H1 (cell line): ENCODE measurements at regions of chr3 and their contacts with region 1.

Region 1: DNA sequence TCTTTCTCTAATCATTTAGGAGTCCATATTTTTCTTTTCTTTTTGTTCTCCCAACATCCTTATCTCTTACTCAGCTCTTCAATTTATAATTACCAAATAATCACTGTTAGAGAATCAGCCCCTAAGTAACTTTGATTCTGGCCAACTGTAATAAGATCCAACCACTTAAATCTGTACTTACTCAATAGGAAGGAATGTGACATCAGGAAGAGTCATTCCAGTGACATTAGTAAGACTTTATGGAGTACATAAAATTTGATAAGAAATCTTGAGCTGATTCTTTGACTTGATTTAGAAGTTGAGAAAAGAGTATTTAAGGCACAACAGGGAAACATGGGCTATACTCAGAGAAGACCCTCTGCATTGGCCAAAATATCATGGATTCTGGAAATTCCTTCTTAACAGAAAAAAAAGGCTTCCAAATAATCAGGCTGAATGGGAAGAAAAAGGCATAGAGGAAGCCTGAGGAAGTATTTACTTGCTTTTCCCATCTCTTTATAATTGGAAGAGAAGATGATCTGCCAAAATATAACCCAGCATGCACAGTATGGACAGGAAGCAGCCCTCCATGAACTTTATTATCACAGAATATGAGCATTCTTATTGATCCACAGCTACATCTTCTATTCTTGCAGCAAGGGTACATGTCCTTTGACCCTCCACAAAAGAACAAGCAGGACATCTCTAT is 289.7 kb upstream of the TPRG1 start:
- DNase-seq: no peak
- H3K4me3 ChIP-seq: no peak overlapping the region
- H3K27ac ChIP-seq: no peak overlapping the region
- H3K4me1 ChIP-seq: no peaks in the 10 kb centered on the region
- H3K27me3 ChIP-seq: no peaks in the 10 kb centered on the region
- CTCF ChIP-seq: no peak
- EP300 ChIP-seq: no peak
- POLR2A ChIP-seq: no peak
- RAD21 ChIP-seq: no peak

Region 2: DNA sequence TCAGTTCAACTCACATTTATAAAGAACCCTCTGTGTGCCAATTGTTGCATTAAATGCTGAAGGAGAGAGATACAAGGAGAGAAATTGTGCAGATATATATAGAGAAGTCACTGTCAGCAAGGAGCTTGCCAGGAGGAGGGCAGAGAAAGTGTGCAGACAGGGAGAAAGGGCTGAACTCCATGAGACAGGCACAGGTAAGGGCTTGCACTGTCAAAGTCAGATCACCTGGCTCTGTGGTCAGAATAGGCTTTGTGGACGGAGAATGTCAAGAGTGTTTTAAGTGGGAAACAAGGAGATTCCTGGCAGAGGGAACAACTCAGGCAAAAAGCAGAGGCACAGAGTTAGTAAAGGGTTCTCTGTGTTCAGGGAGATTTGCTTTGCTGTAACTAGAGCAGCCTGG is 13.3 kb before region 1 on chr3:
- CTCF ChIA-PET with region 1: interaction called, 11 read pairs
- POLR2A ChIA-PET with region 1: no interaction called
- DNase-seq: no peak
- H3K4me3 ChIP-seq: no peak overlapping the region
- H3K27ac ChIP-seq: no peak overlapping the region
- H3K4me1 ChIP-seq: no peaks in the 10 kb centered on the region
- H3K27me3 ChIP-seq: no peaks in the 10 kb centered on the region
- CTCF ChIP-seq: no peak
- EP300 ChIP-seq: no peak
- POLR2A ChIP-seq: no peak
- RAD21 ChIP-seq: no peak

Region 3: DNA sequence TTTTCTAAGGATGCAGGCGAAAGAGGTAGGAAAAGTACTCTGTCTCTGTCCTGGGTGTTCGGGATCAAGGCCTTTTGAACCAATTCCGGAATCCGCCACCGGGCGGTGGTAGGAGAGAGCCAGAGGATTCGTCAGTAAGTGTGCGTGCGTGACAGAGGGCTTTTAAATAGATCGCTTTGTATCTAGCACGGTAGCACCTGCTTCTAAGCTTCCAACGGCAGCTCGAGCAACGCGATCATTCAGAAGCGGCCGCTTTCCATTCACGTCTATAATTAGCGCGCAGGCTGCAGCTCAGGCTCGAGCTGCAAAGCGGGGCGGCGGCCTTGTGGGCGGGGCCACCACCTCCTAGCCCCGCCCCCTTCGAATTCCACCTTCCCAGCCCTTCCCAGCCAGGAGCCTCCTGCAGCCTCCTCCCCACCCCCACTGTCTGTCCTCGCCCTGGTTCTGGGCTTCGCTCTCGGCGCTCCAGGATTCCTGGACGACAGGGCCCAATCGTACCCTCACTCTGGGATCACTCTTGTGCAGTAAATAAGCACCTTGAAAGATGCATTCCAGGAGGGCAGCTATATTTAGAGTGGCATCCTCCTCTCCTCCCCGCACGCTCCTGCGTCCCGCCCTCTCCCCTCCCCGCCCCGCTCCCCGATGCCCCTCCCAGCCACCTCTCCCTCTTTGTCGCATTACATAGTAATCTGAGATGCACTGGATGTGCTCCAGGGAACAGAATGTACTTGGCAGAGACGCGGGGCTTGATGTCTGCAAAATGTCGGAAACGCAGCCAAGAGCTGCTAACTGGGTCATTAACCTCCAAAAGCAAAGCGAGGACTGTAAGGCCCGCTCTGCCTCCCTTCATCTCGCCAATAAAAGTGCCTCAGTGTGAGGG is 65.5 kb after region 1 on chr3:
- CTCF ChIA-PET with region 1: no interaction called
- POLR2A ChIA-PET with region 1: no interaction called
- DNase-seq: peak; percentile 74 to 92
- H3K4me3 ChIP-seq: peak overlapping the region; percentile 49 to 71 (median 66)
- H3K27ac ChIP-seq: peak overlapping the region; percentile 82
- H3K4me1 ChIP-seq: peaks cover 3 to 12% (median 8%) of the 10 kb centered on the region in 4 experiments; a peak in 6 of 7 replicates
- H3K27me3 ChIP-seq: peaks cover 0 to 4% (median 1%) of the 10 kb centered on the region in 4 experiments; a peak in 1 of 7 replicates
- CTCF ChIP-seq: peak; percentile 12 to 55 (median 31)
- EP300 ChIP-seq: no peak
- POLR2A ChIP-seq: peak; percentile 61 to 65
- RAD21 ChIP-seq: peak in 1 of 2 experiments; percentile 32; a peak in 1 of 4 replicates